ENCODE measurements at regions of chr4 and their contacts with region 1.

Region 1: GRCh38 chr4:81069706-81070331 is 39.3 kb downstream of the BMP3 start:
- DNase-seq: peak; percentile 75
- H3K4me3 Mint-ChIP-seq: no peak overlapping the region
- H3K27ac Mint-ChIP-seq: no peak overlapping the region
- H3K4me1 Mint-ChIP-seq: peaks cover 2% of the 10 kb centered on the region
- H3K27me3 Mint-ChIP-seq: peaks cover 9% of the 10 kb centered on the region

Region 2: GRCh38 chr4:81093720-81094401 is 24.0 kb after region 1 on chr4:
- CTCF ChIA-PET with region 1: interaction called, 10 read pairs
- intact Hi-C with region 1: no loop called
- DNase-seq: no peak
- H3K4me3 Mint-ChIP-seq: no peak overlapping the region
- H3K27ac Mint-ChIP-seq: no peak overlapping the region
- H3K4me1 Mint-ChIP-seq: no peaks in the 10 kb centered on the region
- H3K27me3 Mint-ChIP-seq: peaks cover 6% of the 10 kb centered on the region

Region 3: GRCh38 chr4:81260443-81261101 is 190.8 kb after region 1 on chr4:
- CTCF ChIA-PET with region 1: no interaction called
- intact Hi-C with region 1: loop called (anchors 5 kb)
- DNase-seq: no peak
- H3K4me3 Mint-ChIP-seq: no peak overlapping the region
- H3K27ac Mint-ChIP-seq: no peak overlapping the region
- H3K4me1 Mint-ChIP-seq: no peaks in the 10 kb centered on the region
- H3K27me3 Mint-ChIP-seq: peaks cover 4% of the 10 kb centered on the region

Region 4: GRCh38 chr4:81346719-81347118 is 276.9 kb after region 1 on chr4:
- CTCF ChIA-PET with region 1: interaction called, 60 read pairs
- intact Hi-C with region 1: loop called (anchors 1 kb)
- DNase-seq: no peak
- H3K4me3 Mint-ChIP-seq: no peak overlapping the region
- H3K27ac Mint-ChIP-seq: no peak overlapping the region
- H3K4me1 Mint-ChIP-seq: no peaks in the 10 kb centered on the region
- H3K27me3 Mint-ChIP-seq: peaks cover 14% of the 10 kb centered on the region

Region 5: DNA sequence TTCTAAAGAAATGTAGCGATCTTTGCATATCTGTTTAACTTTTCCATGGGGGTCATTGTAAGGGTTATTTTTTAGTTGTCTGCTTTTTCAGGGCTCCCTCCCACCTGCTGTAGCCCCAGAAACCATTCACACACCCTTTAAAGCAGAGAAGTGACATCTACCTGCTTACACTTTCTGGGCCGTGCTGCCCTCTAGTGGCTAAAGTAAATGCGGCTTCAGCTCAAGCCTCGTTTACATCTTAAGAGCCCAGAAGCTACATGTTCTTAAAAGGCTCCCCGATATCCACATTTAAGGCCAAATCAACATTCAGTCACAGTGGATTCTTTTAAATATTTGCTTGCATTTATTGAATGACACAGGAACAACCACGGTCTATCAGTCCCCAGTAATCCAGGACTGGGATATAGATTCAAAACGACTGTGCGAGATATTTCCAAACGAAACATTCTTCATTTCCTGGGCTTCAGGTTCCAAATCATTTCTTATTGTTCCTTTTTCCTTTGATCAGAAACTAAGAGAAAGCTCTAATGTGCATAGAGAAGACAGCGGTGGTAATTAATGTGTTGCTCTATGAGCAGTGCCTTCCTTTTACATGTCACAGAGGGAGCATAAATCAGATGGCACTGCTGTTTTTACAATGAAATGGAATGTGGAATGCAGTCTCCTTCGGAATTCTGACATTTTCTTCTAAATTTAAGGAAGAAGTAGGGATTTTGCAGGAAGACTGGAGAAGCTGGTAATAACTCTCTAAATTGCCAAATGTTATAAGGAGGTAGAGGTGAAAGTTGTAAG is 282.0 kb after region 1 on chr4:
- CTCF ChIA-PET with region 1: interaction called, 60 read pairs
- intact Hi-C with region 1: loop called (anchors 1 kb)
- DNase-seq: peak; percentile 82
- H3K4me3 Mint-ChIP-seq: no peak overlapping the region
- H3K27ac Mint-ChIP-seq: no peak overlapping the region
- H3K4me1 Mint-ChIP-seq: no peaks in the 10 kb centered on the region
- H3K27me3 Mint-ChIP-seq: peaks cover 16% of the 10 kb centered on the region

Measured in activated naive CD4-positive, alpha-beta T cell treated with anti-CD3 and anti-CD28 coated beads for 36 hours (primary cell).